ENCODE measurements at regions of chr18 and their contacts with region 1.

Region 1: GRCh38 chr18:2547477-2548087 is 23.7 kb downstream of the METTL4 start:
- DNase-seq: peak; percentile 22
- ATAC-seq: no peak
- H3K4me3 ChIP-seq: no peak overlapping the region
- H3K27ac ChIP-seq: no peak overlapping the region
- H3K4me1 ChIP-seq: no peaks in the 10 kb centered on the region
- H3K27me3 ChIP-seq: no peaks in the 10 kb centered on the region
- CTCF ChIP-seq: peak; percentile 34 to 62 (median 34); a peak in 4 of 6 replicates
- POLR2A ChIP-seq: no peak
- RAD21 ChIP-seq: peak; percentile 61

Region 2: DNA sequence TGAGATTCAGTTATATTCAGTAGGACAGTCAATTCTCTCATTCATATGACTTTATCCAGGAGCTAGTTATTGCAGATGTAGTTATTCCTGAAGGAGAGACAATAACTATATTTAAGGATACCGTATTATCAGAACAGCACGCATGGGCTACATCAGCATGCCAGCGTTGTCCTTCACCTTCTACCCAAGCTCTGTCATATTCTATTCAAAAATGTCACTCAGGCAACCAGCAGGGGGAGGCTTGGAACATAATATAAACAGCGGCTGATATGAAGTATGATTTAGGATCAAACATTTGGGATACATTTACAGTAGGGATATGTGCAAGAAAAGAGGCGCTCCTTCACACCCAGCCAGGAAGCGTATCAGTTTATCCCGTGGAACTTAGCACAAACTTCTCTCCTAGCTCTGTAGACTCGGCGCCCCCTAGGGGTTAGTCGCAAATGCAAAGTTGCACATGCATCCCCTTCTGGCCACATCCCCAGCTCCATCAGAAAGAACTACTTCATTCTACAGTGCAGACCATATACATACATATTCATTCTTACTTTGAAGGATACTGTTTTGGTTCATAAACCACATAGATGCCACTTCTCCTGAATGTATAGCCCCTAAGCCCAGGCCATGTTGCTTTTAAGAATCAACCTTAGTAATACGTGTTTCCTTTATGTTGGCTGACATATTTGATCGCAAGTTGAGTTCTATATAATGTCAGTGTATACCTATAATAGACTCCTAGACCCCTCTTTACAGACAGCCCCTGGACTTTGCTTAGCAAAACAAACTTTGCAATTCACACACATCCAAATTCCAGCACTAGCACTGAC is 883.5 kb before region 1 on chr18:
- CTCF ChIA-PET with region 1: no interaction called
- POLR2A ChIA-PET with region 1: no interaction called
- RAD21 ChIA-PET with region 1: no interaction called
- intact Hi-C with region 1: loop called (anchors 1 kb)
- DNase-seq: peak; percentile 32
- ATAC-seq: peak; percentile 93
- H3K4me3 ChIP-seq: no peak overlapping the region
- H3K27ac ChIP-seq: no peak overlapping the region
- H3K4me1 ChIP-seq: no peaks in the 10 kb centered on the region
- H3K27me3 ChIP-seq: peaks cover 3% of the 10 kb centered on the region; the same call in 1 of the 2 replicates
- CTCF ChIP-seq: peak; percentile 87 to 98 (median 92)
- POLR2A ChIP-seq: no peak
- RAD21 ChIP-seq: peak; percentile 54

Region 3: GRCh38 chr18:1751243-1751642 is 796.3 kb before region 1 on chr18:
- CTCF ChIA-PET with region 1: no interaction called
- POLR2A ChIA-PET with region 1: no interaction called
- RAD21 ChIA-PET with region 1: no interaction called
- intact Hi-C with region 1: loop called (anchors 10 kb)
- DNase-seq: no peak
- ATAC-seq: no peak; the same call in 1 of the 2 replicates
- H3K4me3 ChIP-seq: no peak overlapping the region
- H3K27ac ChIP-seq: no peak overlapping the region
- H3K4me1 ChIP-seq: no peaks in the 10 kb centered on the region
- H3K27me3 ChIP-seq: no peaks in the 10 kb centered on the region
- CTCF ChIP-seq: peak in 2 of 3 experiments; percentile 13 to 21; a peak in 1 of 6 replicates
- POLR2A ChIP-seq: no peak
- RAD21 ChIP-seq: 0 out of 2 replicates have a peak, but pooled peaks have one; percentile 17

Region 4: GRCh38 chr18:1914490-1914889 is 633.1 kb before region 1 on chr18:
- CTCF ChIA-PET with region 1: interaction called, 6 read pairs
- POLR2A ChIA-PET with region 1: no interaction called
- RAD21 ChIA-PET with region 1: interaction called in 1 of 2 experiments, 4 read pairs
- intact Hi-C with region 1: loop called (anchors 2 kb)
- DNase-seq: peak; percentile 22
- ATAC-seq: peak; percentile 90
- H3K4me3 ChIP-seq: no peak overlapping the region
- H3K27ac ChIP-seq: no peak overlapping the region
- H3K4me1 ChIP-seq: no peaks in the 10 kb centered on the region
- H3K27me3 ChIP-seq: no peaks in the 10 kb centered on the region
- CTCF ChIP-seq: peak; percentile 29 to 70 (median 60); a peak in 5 of 6 replicates
- POLR2A ChIP-seq: no peak
- RAD21 ChIP-seq: peak; percentile 58

Region 5: DNA sequence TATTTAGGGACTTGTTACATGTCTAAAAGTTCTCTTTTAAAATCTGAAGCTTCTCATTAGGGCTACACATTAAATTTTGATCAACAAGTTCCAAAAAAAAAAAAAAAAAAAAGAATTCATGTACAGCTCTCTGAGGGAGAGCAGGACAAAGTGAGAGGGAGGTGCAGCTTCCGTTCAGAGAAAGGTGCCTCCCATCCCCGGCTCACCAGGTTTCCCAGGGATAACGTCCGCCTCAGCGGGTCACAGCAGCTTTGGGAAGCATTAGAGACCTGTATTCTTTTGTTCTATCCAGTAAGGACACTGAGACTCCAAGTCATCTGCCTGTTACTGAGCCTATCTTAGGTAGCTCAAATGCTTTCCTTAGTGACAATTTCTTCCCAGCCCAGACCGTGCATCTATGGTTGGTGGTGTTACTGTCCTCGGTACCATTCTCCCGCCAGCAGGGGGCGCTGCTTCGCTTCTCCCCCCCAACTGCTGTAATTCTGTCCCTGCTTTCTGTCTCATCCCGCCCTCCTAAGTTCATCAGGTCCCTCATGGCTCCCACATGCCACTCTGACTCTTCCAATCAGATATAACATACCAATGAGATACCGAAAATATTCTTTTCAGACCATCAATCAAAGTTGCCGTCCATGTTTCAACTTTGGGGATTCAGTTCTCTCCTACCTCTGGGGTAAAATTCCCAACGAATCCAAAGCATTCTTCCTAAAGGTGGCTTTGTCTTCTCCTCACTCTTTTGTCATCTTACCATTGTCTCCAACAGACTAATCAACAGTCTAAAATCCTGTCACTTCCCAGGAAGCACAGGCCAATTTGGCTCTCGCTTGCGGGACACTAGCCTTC is 442.7 kb before region 1 on chr18:
- CTCF ChIA-PET with region 1: interaction called, 27 read pairs
- POLR2A ChIA-PET with region 1: no interaction called
- RAD21 ChIA-PET with region 1: no interaction called
- intact Hi-C with region 1: loop called (anchors 1 kb)
- DNase-seq: peak; percentile 31
- ATAC-seq: peak; percentile 99
- H3K4me3 ChIP-seq: no peak overlapping the region
- H3K27ac ChIP-seq: no peak overlapping the region
- H3K4me1 ChIP-seq: no peaks in the 10 kb centered on the region
- H3K27me3 ChIP-seq: no peaks in the 10 kb centered on the region
- CTCF ChIP-seq: peak; percentile 48 to 93 (median 81); a peak in 5 of 6 replicates
- POLR2A ChIP-seq: no peak
- RAD21 ChIP-seq: peak; percentile 73

Region 6: GRCh38 chr18:2237706-2238105 is 309.9 kb before region 1 on chr18:
- CTCF ChIA-PET with region 1: no interaction called
- POLR2A ChIA-PET with region 1: no interaction called
- RAD21 ChIA-PET with region 1: no interaction called
- intact Hi-C with region 1: loop called (anchors 5 kb)
- DNase-seq: no peak
- ATAC-seq: no peak
- H3K4me3 ChIP-seq: no peak overlapping the region
- H3K27ac ChIP-seq: no peak overlapping the region
- H3K4me1 ChIP-seq: no peaks in the 10 kb centered on the region
- H3K27me3 ChIP-seq: no peaks in the 10 kb centered on the region
- CTCF ChIP-seq: no peak
- POLR2A ChIP-seq: no peak
- RAD21 ChIP-seq: no peak

Region 7: GRCh38 chr18:2571200-2572143 is 23.9 kb after region 1 on chr18 and contains the starts of genes METTL4 and NDC80:
- CTCF ChIA-PET with region 1: no interaction called
- POLR2A ChIA-PET with region 1: no interaction called
- RAD21 ChIA-PET with region 1: no interaction called
- intact Hi-C with region 1: no loop called
- DNase-seq: peak; percentile 79
- ATAC-seq: peak; percentile 88
- H3K4me3 ChIP-seq: peak within 1 kb of the TSS; percentile 80 to 91
- H3K27ac ChIP-seq: peak within 1 kb of the TSS; percentile 91
- H3K4me1 ChIP-seq: peaks cover 8 to 16% of the 10 kb centered on the region in 2 experiments; a peak in 3 of 4 replicates
- H3K27me3 ChIP-seq: no peaks in the 10 kb centered on the region
- CTCF ChIP-seq: no peak
- POLR2A ChIP-seq: peak; percentile 55
- RAD21 ChIP-seq: no peak
- total RNA-seq, gene METTL4: 15.5 TPM
- total RNA-seq, gene NDC80: 46.0 TPM